Psoas muscle (tissue), 8 donors: ENCODE measurements at regions of chr1 and their contacts with region 1.

Region 1: GRCh38 chr1:112390775-112391602 is 5.0 kb upstream of the CTTNBP2NL start:
- DNase-seq: peak; percentile 83 to 85
- ATAC-seq: peak; percentile 85 to 95 (median 90)
- H3K4me3 ChIP-seq: peak overlapping the region; percentile 58
- H3K27ac ChIP-seq: peak overlapping the region; percentile 58
- H3K4me1 ChIP-seq: peaks cover 5% of the 10 kb centered on the region
- H3K27me3 ChIP-seq: peaks cover 0 to 4% (median 0%) of the 10 kb centered on the region in 3 donors
- CTCF ChIP-seq: peak; percentile 91

Region 2: GRCh38 chr1:112466078-112466660 is 75.2 kb after region 1 on chr1:
- intact Hi-C with region 1: loop called (anchors 1 to 2 kb)
- DNase-seq: peak; percentile 95 to 97
- ATAC-seq: peak; percentile 93 to 99 (median 96)
- H3K4me3 ChIP-seq: peak overlapping the region; percentile 59
- H3K27ac ChIP-seq: peak overlapping the region; percentile 46
- H3K4me1 ChIP-seq: no peaks in the 10 kb centered on the region
- H3K27me3 ChIP-seq: no peaks in the 10 kb centered on the region
- CTCF ChIP-seq: peak; percentile 88

Region 3: DNA sequence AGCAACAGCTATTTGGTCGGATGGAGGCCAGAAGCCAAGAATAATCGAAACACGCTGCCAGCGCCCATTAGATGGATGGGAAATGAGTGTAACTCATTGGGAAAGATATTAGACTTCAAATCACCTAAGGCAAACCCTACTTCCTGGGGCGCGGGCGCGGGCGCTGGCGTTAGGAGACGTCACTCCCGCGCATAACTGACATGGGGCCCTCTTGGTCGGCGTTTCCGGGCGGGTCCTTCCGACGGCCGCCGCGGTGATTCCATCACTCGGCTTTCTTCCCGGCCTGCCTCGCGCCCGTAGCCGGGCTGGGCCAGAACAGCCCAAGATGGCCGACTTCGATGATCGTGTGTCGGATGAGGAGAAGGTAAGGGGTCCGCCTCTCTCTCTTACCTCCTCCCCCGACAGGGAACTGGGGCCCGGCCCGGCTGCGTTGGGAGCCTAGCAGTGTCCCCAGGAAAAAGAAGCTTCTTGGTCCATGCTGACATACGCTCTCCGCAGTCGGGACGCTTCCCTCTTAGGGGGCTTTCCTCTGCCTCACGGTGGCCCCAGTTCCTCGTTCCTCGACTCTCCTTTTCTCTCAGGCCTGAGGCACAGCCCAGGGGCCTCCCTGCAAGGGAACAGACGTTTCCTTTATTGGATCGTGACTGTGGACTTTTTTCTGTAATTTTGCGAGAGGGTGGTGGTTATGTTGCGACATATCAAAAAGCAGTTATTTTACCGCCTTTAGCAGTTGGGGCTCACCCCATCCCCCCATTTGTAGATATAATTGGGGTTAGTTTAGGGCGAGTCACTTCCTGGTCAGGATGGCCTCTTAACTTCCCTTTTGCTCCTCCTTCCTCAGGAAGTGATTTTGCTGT is 228.8 kb after region 1 on chr1 and contains the start of gene CAPZA1:
- intact Hi-C with region 1: loop called in 1 of 2 experiments (anchors 5 kb)
- DNase-seq: peak; percentile 92 to 96
- ATAC-seq: peak; percentile 95 to 96 (median 95)
- H3K4me3 ChIP-seq: peak within 1 kb of the TSS; percentile 88
- H3K27ac ChIP-seq: peak within 1 kb of the TSS; percentile 96
- H3K4me1 ChIP-seq: peaks cover 50% of the 10 kb centered on the region
- H3K27me3 ChIP-seq: no peaks in the 10 kb centered on the region
- CTCF ChIP-seq: no peak
- total RNA-seq, gene CAPZA1: 24.2 to 39.1 (median 33.1) TPM

Region 4: GRCh38 chr1:112706908-112707663 is 316.1 kb after region 1 on chr1 and contains the start of gene RHOC:
- intact Hi-C with region 1: loop called (anchors 2 to 5 kb)
- DNase-seq: peak; percentile 89 to 93
- ATAC-seq: peak; percentile 84 to 91 (median 90)
- H3K4me3 ChIP-seq: peak within 1 kb of the TSS; percentile 83
- H3K27ac ChIP-seq: peak within 1 kb of the TSS; percentile 83
- H3K4me1 ChIP-seq: peaks cover 22% of the 10 kb centered on the region
- H3K27me3 ChIP-seq: no peaks in the 10 kb centered on the region
- CTCF ChIP-seq: peak; percentile 90
- total RNA-seq, gene RHOC: 43.5 to 88.3 (median 75.5) TPM

Region 5: GRCh38 chr1:112803906-112804762 is 413.1 kb after region 1 on chr1:
- intact Hi-C with region 1: loop called in 1 of 2 experiments (anchors 10 kb)
- DNase-seq: peak; percentile 56 to 84
- ATAC-seq: peak; percentile 78 to 85 (median 83)
- H3K4me3 ChIP-seq: no peak overlapping the region
- H3K27ac ChIP-seq: no peak overlapping the region
- H3K4me1 ChIP-seq: peaks cover 8% of the 10 kb centered on the region
- H3K27me3 ChIP-seq: no peaks in the 10 kb centered on the region
- CTCF ChIP-seq: peak; percentile 75